Natural killer cell (primary cell): ENCODE measurements at regions of chr19 and their contacts with region 1.

Region 1: DNA sequence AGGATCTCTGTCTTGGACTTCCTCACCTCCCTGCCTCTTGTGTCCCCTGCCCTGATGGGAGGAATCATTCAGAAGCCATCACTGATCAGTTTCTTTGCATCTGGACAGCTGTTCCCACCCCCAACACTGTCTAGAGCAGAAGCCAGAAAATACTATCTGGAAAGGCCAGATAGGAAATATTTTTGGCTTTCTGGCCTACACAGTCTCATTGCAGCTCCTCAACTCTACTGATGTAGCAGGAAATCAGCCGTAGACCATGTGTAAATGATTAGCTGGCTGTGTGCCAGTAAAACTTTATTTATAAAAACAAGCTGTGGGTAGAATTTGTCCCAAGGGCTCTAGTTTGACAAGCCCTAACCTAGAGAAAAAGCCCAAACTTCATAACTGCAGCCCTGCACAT is 5.6 kb downstream of the SIGLEC7 start:
- DNase-seq: no peak
- ATAC-seq: peak in 2 of 3 donors; percentile 8 to 31
- H3K4me3 ChIP-seq: no peak overlapping the region
- H3K4me3 Mint-ChIP-seq: peak overlapping the region; percentile 85
- H3K27ac ChIP-seq: peak overlapping the region; percentile 58
- H3K27ac Mint-ChIP-seq: peak overlapping the region; percentile 89 to 94
- H3K4me1 ChIP-seq: peaks cover 64% of the 10 kb centered on the region
- H3K4me1 Mint-ChIP-seq: peaks cover 80 to 98% of the 10 kb centered on the region in 2 donors
- H3K27me3 ChIP-seq: no peaks in the 10 kb centered on the region
- H3K27me3 Mint-ChIP-seq: no peaks in the 10 kb centered on the region
- CTCF ChIP-seq: no peak

Region 2: GRCh38 chr19:51108066-51108804 is 39.4 kb before region 1 on chr19 and contains the start of gene CTU1:
- intact Hi-C with region 1: loop called (anchors 5 kb)
- DNase-seq: peak; percentile 94 to 99
- ATAC-seq: peak; percentile 96 to 99 (median 96)
- H3K4me3 ChIP-seq: peak within 1 kb of the TSS; percentile 80
- H3K4me3 Mint-ChIP-seq: peak within 1 kb of the TSS; percentile 94
- H3K27ac ChIP-seq: peak within 1 kb of the TSS; percentile 82
- H3K27ac Mint-ChIP-seq: peak within 1 kb of the TSS; percentile 92 to 99
- H3K4me1 ChIP-seq: peaks cover 21% of the 10 kb centered on the region
- H3K4me1 Mint-ChIP-seq: peaks cover 34 to 42% of the 10 kb centered on the region in 2 donors
- H3K27me3 ChIP-seq: no peaks in the 10 kb centered on the region
- H3K27me3 Mint-ChIP-seq: no peaks in the 10 kb centered on the region
- CTCF ChIP-seq: no peak
- total RNA-seq, gene CTU1: 2.5 to 6.5 (median 3.8) TPM

Region 3: DNA sequence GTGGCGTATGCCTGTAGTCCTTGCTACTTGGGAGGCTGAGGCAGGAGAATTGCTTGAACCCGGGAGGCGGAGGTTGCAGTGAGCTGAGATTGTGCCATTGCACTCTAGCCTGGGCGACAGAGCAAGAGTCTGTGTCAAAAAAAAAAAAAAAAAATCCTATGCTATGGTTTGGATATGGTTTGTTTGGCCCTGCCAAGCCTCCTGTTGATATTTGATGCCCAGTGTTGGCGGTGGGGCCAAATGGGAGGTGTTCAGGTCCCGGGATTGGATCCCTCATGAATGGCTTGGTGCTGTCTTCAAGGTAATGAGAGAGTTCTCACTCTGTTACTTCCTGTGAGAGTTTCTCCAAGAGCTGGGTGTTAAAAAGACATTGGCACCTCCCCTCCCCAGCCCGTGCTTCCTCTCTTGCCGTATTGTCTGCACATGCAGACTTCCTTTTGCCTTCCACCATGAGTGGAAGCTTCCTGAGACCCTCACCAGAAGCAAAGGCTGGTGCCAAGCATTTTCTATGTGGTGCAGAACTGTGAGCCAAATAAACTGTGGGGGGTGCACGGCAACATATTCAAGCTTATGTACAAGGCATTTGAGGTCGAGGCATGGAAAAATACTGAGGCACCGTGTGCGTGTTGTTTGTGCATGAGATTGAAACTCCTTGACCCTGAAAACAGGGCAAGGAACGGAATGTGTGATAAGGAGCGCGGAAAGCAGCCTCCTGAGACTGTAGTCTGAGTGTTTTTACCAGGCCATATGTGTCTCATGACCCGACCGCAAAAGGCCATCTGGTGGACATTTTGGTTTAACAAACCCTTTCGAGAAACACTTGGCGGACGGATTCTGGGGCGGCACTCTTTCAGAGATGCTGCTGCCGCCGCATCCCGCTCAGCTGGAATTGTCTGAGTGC is 15.6 kb before region 1 on chr19:
- intact Hi-C with region 1: loop called (anchors 1 kb)
- DNase-seq: peak in 1 of 2 donors; percentile 67
- ATAC-seq: peak; percentile 81 to 94 (median 86)
- H3K4me3 ChIP-seq: no peak overlapping the region
- H3K4me3 Mint-ChIP-seq: peak overlapping the region; percentile 84
- H3K27ac ChIP-seq: peak overlapping the region; percentile 50
- H3K27ac Mint-ChIP-seq: peak overlapping the region; percentile 89 to 93
- H3K4me1 ChIP-seq: peaks cover 84% of the 10 kb centered on the region
- H3K4me1 Mint-ChIP-seq: peaks cover 84 to 86% of the 10 kb centered on the region in 2 donors
- H3K27me3 ChIP-seq: no peaks in the 10 kb centered on the region
- H3K27me3 Mint-ChIP-seq: no peaks in the 10 kb centered on the region
- CTCF ChIP-seq: no peak

Region 4: GRCh38 chr19:51181913-51182419 is 34.3 kb after region 1 on chr19:
- intact Hi-C with region 1: no loop called
- DNase-seq: no peak
- ATAC-seq: peak; percentile 45 to 73 (median 49)
- H3K4me3 ChIP-seq: no peak overlapping the region
- H3K4me3 Mint-ChIP-seq: peak overlapping the region; percentile 82
- H3K27ac ChIP-seq: no peak overlapping the region
- H3K27ac Mint-ChIP-seq: peak overlapping the region in 1 of 2 donors; percentile 36
- H3K4me1 ChIP-seq: peaks cover 34% of the 10 kb centered on the region
- H3K4me1 Mint-ChIP-seq: peaks cover 10 to 27% of the 10 kb centered on the region in 2 donors
- H3K27me3 ChIP-seq: no peaks in the 10 kb centered on the region
- H3K27me3 Mint-ChIP-seq: peaks cover 8 to 12% of the 10 kb centered on the region in 2 donors
- CTCF ChIP-seq: no peak

Region 5: GRCh38 chr19:51226067-51226466 is 78.4 kb after region 1 on chr19:
- intact Hi-C with region 1: no loop called
- DNase-seq: no peak
- ATAC-seq: no peak
- H3K4me3 ChIP-seq: no peak overlapping the region
- H3K4me3 Mint-ChIP-seq: no peak overlapping the region
- H3K27ac ChIP-seq: no peak overlapping the region
- H3K27ac Mint-ChIP-seq: no peak overlapping the region
- H3K4me1 ChIP-seq: peaks cover 8% of the 10 kb centered on the region
- H3K4me1 Mint-ChIP-seq: no peaks in the 10 kb centered on the region
- H3K27me3 ChIP-seq: no peaks in the 10 kb centered on the region
- H3K27me3 Mint-ChIP-seq: peaks cover 16 to 42% of the 10 kb centered on the region in 2 donors
- CTCF ChIP-seq: no peak